ENCODE measurements at regions of chr20 and their contacts with region 1.

Region 1: DNA sequence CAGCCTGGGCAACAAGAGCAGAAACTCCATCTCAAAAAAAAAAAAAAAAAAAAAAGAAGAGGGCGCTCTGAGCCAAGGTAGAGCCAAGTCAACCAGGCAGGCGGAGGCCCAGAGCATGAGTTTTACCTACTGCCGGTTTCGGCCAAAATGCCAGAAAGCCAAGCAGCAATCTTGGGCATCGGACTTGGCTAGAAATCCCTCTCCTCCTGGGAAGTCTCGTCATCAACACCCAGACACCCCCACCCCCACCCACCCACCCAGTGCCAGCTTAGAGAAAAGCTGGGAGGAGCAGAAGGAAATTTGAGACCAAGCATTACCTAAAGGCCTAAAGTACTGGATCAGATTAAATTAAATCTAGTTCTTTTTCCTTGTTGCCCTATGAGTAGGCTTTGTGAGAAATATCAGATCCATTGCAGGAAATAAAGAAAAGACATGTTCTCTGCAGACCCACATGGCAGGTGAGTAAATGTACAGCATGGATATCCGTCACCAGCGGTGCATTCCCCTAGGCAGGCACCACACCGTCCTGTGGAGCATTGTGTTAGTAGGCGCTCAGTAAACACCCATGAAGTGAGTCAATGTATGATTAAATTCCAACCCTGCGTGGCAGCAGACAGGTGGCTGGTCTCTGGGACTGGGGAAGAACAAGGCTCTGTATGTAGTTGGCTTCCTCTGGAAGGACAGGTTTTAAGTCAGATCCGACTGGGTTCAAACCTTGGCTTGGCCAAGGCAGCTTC is 21.0 kb downstream of the RIPOR3 start:
- DNase-seq: no peak
- H3K4me3 ChIP-seq: no peak overlapping the region
- H3K27ac ChIP-seq: peak overlapping the region; percentile 12
- H3K4me1 ChIP-seq: peaks cover 15% of the 10 kb centered on the region
- H3K27me3 ChIP-seq: no peaks in the 10 kb centered on the region
- CTCF ChIP-seq: no peak

Region 2: GRCh38 chr20:50744143-50744792 is 74.0 kb after region 1 on chr20:
- intact Hi-C with region 1: loop called (anchors 10 kb)
- DNase-seq: peak; percentile 43
- H3K4me3 ChIP-seq: no peak overlapping the region
- H3K27ac ChIP-seq: peak overlapping the region; percentile 93
- H3K4me1 ChIP-seq: peaks cover 69% of the 10 kb centered on the region
- H3K27me3 ChIP-seq: peaks cover 4% of the 10 kb centered on the region
- CTCF ChIP-seq: peak; percentile 50

Region 3: GRCh38 chr20:51121901-51122441 is 451.7 kb after region 1 on chr20:
- intact Hi-C with region 1: no loop called
- DNase-seq: no peak
- H3K4me3 ChIP-seq: no peak overlapping the region
- H3K27ac ChIP-seq: no peak overlapping the region
- H3K4me1 ChIP-seq: no peaks in the 10 kb centered on the region
- H3K27me3 ChIP-seq: peaks cover 76% of the 10 kb centered on the region
- CTCF ChIP-seq: no peak